Activated CD8-positive, alpha-beta T cell treated with anti-CD3 and anti-CD28 coated beads, Interleukin-2, amount 10 ng/mL, durations not matched to agents 7 days and 5 days (primary cell): ENCODE measurements at regions of chr11 and their contacts with region 1.

Region 1: GRCh38 chr11:842370-843002 is at the starts of genes POLR2L and TSPAN4:
- DNase-seq: peak; percentile 92
- ATAC-seq: peak; percentile 75
- H3K4me3 Mint-ChIP-seq: peak within 1 kb of the TSS; percentile 88
- H3K27ac Mint-ChIP-seq: peak within 1 kb of the TSS; percentile 86
- H3K4me1 Mint-ChIP-seq: peaks cover 28% of the 10 kb centered on the region
- H3K27me3 Mint-ChIP-seq: no peaks in the 10 kb centered on the region
- total RNA-seq, gene POLR2L: 127 to 140 TPM
- total RNA-seq, gene TSPAN4: 20.0 to 21.7 TPM

Region 2: DNA sequence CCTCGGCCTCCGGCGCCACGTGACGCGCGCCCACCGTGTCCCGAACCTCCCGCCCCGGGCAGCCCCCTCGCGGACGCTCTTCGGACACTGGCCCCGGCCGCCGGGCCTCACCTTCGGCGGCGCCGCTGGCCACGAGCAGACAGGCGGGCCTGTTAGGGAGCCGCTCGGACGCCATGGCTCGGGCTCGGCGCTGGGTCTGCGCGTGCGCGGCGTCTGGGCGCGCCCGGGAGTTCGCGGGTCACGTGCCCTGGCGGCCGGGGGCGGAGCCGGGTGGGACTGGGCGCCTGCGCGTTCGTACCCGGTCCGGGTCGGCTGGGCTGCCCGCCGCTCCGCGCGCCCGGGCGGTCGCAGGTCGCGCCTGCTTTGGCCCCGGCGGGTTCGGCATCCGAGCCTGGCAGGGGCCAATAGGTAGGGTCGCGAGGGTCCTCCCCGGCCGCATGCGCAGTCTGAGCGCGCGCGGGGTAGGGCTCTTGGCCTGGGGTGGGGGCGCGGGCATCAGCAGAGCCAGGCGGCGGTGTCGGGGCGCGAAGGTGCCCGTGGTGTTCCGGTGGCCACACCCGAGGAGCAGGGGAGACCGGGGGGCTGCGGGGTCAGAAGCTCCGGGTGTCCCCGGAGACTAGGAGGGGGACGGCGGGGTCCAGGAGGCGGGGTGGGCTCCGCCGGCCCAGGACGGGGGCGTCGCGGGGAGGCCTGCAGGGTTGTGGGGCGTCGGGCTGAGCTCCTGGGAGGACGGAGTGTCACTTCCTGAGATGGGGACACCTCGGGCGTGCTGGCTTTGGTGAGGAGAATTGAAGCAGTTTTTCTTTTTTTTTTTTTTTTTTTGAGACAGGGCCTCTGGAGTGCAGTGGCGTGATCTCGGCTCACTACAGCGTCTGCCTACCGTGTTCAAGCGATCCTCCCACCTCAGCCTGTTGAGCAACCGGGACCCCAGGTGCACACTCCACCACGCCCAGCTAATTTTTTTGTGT is 64.9 kb before region 1 on chr11 and contains the start of gene GATD1:
- CTCF ChIA-PET with region 1: no interaction called
- POLR2A ChIA-PET with region 1: no interaction called
- DNase-seq: peak; percentile 95
- ATAC-seq: peak; percentile 87
- H3K4me3 Mint-ChIP-seq: peak within 1 kb of the TSS; percentile 83
- H3K27ac Mint-ChIP-seq: peak within 1 kb of the TSS; percentile 88
- H3K4me1 Mint-ChIP-seq: peaks cover 34% of the 10 kb centered on the region
- H3K27me3 Mint-ChIP-seq: no peaks in the 10 kb centered on the region
- total RNA-seq, gene GATD1: 52.1 to 63.2 TPM

Region 3: DNA sequence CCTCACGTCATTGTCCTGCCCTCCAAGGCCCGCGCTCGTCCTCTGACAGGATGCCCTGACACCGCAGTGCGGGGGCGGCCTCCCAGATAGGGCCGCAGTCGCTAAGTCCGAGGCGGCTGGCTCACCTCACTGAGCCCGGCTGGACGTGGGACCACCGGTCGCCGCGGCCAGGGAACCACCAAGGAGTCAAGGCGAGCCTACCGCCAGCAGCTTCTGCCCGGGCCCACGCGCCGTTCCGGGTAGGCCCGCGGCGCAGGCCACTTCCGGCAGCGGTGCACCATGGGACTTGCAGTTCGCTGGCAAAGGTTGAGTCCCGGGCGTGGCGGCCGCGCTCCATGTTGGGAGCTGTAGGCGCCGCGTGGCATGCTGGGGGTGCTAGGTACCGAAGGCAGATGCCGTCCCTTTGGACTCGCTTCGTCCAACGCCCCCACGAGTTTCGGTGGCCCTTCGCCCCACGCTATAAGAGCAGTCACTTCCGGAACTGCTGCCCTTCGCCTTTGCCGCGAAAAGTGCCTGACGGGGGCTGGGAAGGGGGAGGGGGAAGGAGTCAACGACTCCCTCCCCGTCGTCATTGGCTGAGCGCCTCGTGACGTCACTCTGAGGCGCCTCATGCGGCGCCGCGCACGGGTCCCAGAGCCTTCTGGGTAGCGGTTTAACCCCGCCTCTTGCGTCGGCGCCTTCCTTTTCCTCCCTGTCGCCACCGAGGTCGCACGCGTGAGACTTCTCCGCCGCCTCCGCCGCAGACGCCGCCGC is 33.0 kb before region 1 on chr11 and contains the start of gene RPLP2:
- CTCF ChIA-PET with region 1: interaction called, 4 read pairs
- POLR2A ChIA-PET with region 1: interaction called, 10 read pairs
- DNase-seq: peak; percentile 98
- ATAC-seq: peak; percentile 85
- H3K4me3 Mint-ChIP-seq: peak within 1 kb of the TSS; percentile 93
- H3K27ac Mint-ChIP-seq: peak within 1 kb of the TSS; percentile 97
- H3K4me1 Mint-ChIP-seq: peaks cover 45% of the 10 kb centered on the region
- H3K27me3 Mint-ChIP-seq: no peaks in the 10 kb centered on the region
- total RNA-seq, gene RPLP2: 2,268 to 2,338 TPM

Region 4: GRCh38 chr11:862081-862661 is 19.7 kb after region 1 on chr11:
- CTCF ChIA-PET with region 1: no interaction called
- POLR2A ChIA-PET with region 1: no interaction called
- DNase-seq: no peak
- ATAC-seq: no peak
- H3K4me3 Mint-ChIP-seq: no peak overlapping the region
- H3K27ac Mint-ChIP-seq: no peak overlapping the region
- H3K4me1 Mint-ChIP-seq: no peaks in the 10 kb centered on the region
- H3K27me3 Mint-ChIP-seq: no peaks in the 10 kb centered on the region

Region 5: DNA sequence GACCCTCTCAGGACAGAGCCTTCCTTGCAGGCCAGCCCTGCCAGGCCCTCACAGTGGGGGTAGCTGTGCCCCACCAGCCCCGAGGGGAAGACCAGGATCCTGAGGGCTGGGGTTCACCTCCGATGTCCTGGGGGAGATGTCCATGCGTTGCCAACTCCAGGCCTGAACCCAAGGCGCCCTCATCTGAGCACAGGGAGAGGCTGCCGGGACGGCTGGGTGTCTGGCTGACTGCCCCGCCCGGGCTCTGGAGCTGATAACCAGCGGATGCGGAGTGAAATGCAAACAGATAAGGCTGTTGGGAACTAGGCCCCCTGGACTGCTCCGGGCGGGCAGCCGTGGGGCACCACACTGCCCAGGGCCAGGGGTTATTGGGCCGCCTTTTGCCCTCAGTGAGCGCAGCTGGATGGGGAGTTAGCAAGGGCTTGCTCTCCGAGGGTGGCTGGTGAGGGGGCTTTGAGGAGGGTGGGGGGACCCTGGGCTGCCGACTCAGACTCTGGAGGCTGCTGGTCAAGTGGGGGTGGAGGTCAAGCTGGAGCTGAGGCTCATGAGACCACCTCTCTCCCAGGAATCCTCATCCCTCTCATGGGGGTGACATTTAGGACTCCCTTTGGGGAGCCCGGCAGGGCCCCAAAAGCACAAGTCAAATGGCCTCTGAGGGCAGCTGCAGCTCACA is 199.6 kb after region 1 on chr11:
- CTCF ChIA-PET with region 1: no interaction called
- POLR2A ChIA-PET with region 1: no interaction called
- DNase-seq: no peak
- ATAC-seq: no peak
- H3K4me3 Mint-ChIP-seq: no peak overlapping the region
- H3K27ac Mint-ChIP-seq: no peak overlapping the region
- H3K4me1 Mint-ChIP-seq: no peaks in the 10 kb centered on the region
- H3K27me3 Mint-ChIP-seq: peaks cover 6% of the 10 kb centered on the region